ENCODE measurements at regions of chr20 and their contacts with region 1.

Region 1: GRCh38 chr20:2523919-2524708 is 12.3 kb upstream of the TMC2 start:
- DNase-seq: peak; percentile 82
- ATAC-seq: peak; percentile 77
- H3K4me3 ChIP-seq: peak overlapping the region; percentile 75
- H3K27ac ChIP-seq: no peak overlapping the region
- H3K4me1 ChIP-seq: no peaks in the 10 kb centered on the region
- H3K27me3 ChIP-seq: peaks cover 15% of the 10 kb centered on the region
- CTCF ChIP-seq: peak; percentile 98

Region 2: GRCh38 chr20:2183381-2183780 is 340.7 kb before region 1 on chr20:
- CTCF ChIA-PET with region 1: no interaction called
- POLR2A ChIA-PET with region 1: no interaction called
- intact Hi-C with region 1: no loop called
- DNase-seq: no peak
- ATAC-seq: no peak
- H3K4me3 ChIP-seq: no peak overlapping the region
- H3K27ac ChIP-seq: no peak overlapping the region
- H3K4me1 ChIP-seq: no peaks in the 10 kb centered on the region
- H3K27me3 ChIP-seq: peaks cover 64% of the 10 kb centered on the region
- CTCF ChIP-seq: no peak

Region 3: GRCh38 chr20:2230716-2231488 is 293.2 kb before region 1 on chr20:
- CTCF ChIA-PET with region 1: no interaction called
- POLR2A ChIA-PET with region 1: interaction called, 13 read pairs
- intact Hi-C with region 1: no loop called
- DNase-seq: peak; percentile 22
- ATAC-seq: peak; percentile 48
- H3K4me3 ChIP-seq: no peak overlapping the region
- H3K27ac ChIP-seq: no peak overlapping the region
- H3K4me1 ChIP-seq: no peaks in the 10 kb centered on the region
- H3K27me3 ChIP-seq: peaks cover 19% of the 10 kb centered on the region
- CTCF ChIP-seq: no peak

Region 4: DNA sequence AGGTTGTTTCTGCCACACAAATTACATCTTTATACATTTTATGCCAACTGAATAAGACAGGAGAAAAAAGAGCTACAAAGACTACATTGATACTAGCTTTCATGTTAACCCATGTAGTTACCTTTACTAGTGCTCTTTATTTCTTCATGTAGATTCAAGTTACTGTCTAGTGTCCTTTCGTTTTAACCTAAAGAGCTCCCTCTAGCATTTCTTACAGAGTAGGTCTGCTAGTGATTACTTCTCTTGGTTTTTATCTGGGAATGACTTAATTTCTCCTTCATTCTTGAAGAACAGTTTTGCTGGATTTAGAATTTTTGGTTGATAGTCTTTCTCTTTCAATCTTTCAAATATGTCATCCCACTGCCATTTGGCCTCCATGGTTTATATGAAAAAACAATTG is 107.1 kb after region 1 on chr20:
- CTCF ChIA-PET with region 1: interaction called, 7 read pairs
- POLR2A ChIA-PET with region 1: no interaction called
- intact Hi-C with region 1: loop called (anchors 5 kb)
- DNase-seq: peak; percentile 31
- ATAC-seq: peak; percentile 45; the same call in 1 of the 2 replicates
- H3K4me3 ChIP-seq: no peak overlapping the region
- H3K27ac ChIP-seq: no peak overlapping the region
- H3K4me1 ChIP-seq: no peaks in the 10 kb centered on the region
- H3K27me3 ChIP-seq: peaks cover 9% of the 10 kb centered on the region; the same call in 1 of the 2 replicates
- CTCF ChIP-seq: peak; percentile 55; the same call in 1 of the 2 replicates

Region 5: GRCh38 chr20:2651772-2652723 is 127.9 kb after region 1 on chr20 and contains the start of gene NOP56:
- CTCF ChIA-PET with region 1: interaction called, 3 read pairs
- POLR2A ChIA-PET with region 1: no interaction called
- intact Hi-C with region 1: loop called (anchors 5 kb)
- DNase-seq: peak; percentile 94
- ATAC-seq: peak; percentile 92
- H3K4me3 ChIP-seq: peak within 1 kb of the TSS; percentile 97
- H3K27ac ChIP-seq: peak within 1 kb of the TSS; percentile 80
- H3K4me1 ChIP-seq: peaks cover 25% of the 10 kb centered on the region
- H3K27me3 ChIP-seq: no peaks in the 10 kb centered on the region
- CTCF ChIP-seq: no peak
- total RNA-seq, gene NOP56: 570 and 642 TPM in 2 replicates

Region 6: GRCh38 chr20:2671977-2672376 is 147.9 kb after region 1 on chr20:
- CTCF ChIA-PET with region 1: no interaction called
- POLR2A ChIA-PET with region 1: no interaction called
- intact Hi-C with region 1: loop called (anchors 2 kb)
- DNase-seq: no peak
- ATAC-seq: no peak
- H3K4me3 ChIP-seq: no peak overlapping the region
- H3K27ac ChIP-seq: no peak overlapping the region
- H3K4me1 ChIP-seq: no peaks in the 10 kb centered on the region
- H3K27me3 ChIP-seq: 0 out of 2 replicates have a peak, but pooled peaks cover 4% of the 10 kb centered on the region
- CTCF ChIP-seq: peak; percentile 41

Measured in PC-3 (cell line).